ENCODE measurements at regions of chr1 and their contacts with region 1.

Region 1: DNA sequence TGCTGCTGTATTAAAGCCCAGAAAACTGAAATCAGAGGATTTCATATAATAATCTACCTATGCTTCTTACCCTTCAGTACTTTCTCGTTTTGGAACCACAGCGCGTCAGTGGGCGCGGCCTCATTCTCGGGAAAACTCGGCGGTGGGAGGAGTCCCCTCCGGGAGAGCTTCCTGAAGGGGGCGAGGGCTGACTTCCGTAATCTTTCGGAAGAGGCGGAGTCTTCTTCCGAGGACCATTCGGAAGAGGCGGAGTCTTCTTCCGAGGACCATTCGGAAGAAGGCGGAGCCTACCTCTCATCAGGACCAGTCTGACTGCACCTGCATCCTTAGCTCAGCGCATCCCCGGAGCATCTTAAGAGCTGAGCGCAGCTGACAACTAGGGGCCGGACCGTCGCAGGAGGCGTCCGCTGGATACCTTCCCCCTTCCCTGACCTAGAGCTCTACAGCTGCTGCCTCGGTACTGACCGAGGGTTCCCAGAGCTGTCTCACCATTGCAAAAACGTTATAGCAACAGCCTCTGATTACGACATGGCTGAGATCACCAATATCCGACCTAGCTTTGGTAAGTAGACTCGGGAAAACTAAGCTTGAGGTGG is at the start of gene SYT11:
- DNase-seq: peak; percentile 93 to 99 (median 94)

Region 2: DNA sequence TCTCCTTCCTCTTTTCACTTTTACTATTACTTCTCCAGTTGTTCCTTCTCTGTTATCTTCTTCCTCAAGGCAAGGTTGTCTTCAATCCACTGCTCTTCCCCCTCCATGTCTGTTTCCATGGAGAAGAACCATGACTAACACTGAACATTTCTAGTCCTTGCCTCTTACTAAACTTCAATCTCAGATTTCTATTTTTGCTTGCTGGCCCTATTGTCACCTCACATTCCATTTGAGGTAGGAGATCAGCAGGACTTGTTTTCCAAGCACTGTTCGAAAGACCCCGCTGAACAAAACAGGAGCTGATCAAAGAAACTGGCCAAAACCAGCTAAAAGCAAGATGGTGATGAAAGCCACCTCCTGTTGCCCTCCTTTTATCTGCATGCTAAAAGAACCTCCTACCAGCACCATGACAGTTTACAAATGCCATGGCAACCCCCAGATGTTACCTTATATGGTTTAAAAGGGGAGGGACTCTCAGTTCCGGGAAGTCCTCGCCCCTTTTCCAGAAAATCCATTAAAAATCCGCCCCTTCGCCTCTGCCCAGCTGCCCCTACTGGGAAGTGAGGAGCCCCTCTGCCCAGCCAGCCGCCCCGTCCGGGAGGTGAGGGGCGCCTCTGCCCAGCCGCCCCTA is 24.9 kb before region 1 on chr1:
- intact Hi-C with region 1: no loop called
- DNase-seq: no peak

Region 3: GRCh38 chr1:155911156-155912055 is 52.1 kb after region 1 on chr1 and contains the start of gene RIT1:
- intact Hi-C with region 1: loop called (anchors 2 kb)
- DNase-seq: peak; percentile 66 to 97 (median 84)

Region 4: GRCh38 chr1:155925506-155925905 is 66.2 kb after region 1 on chr1:
- intact Hi-C with region 1: no loop called
- DNase-seq: no peak

Region 5: GRCh38 chr1:155989242-155990004 is 130.1 kb after region 1 on chr1:
- intact Hi-C with region 1: loop called (anchors 5 kb)
- DNase-seq: peak; percentile 69 to 97 (median 82)

Measured in posterior cingulate gyrus (tissue), 11 donors.